Dendritic cell treated with granulocyte-macrophage colony-stimulating factor and Interleukin-4, amounts not matched to agents 40 ng/mL and 50 ng/mL, for 4 days (primary cell): ENCODE measurements at regions of chr1 and their contacts with region 1.

Region 1: DNA sequence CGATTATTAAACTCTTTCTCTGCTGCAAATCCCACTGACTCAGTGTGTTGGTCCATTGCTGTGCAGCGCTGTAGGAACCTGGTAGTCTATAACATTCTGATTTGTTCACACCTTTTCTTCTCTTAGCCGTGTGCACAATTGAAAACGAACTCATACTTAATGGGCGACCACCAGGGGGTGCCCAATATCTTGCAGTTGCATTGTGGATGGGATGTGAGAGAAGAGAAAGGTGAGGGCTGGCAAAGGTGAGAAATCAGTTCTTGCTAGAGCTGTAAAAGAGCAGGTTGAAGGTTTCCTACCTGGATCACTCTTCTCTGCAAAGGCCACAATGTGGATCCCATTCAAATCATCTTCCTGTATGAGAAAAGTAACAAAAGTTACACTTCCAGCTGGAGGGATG is 51.0 kb downstream of the CASQ2 start:
- H3K4me3 Mint-ChIP-seq: no peak overlapping the region
- H3K27ac Mint-ChIP-seq: no peak overlapping the region
- H3K4me1 Mint-ChIP-seq: peaks cover 9% of the 10 kb centered on the region
- H3K27me3 Mint-ChIP-seq: no peaks in the 10 kb centered on the region

Region 2: GRCh38 chr1:115764541-115764940 is 47.0 kb after region 1 on chr1:
- intact Hi-C with region 1: loop called (anchors 1 kb)
- H3K4me3 Mint-ChIP-seq: no peak overlapping the region
- H3K27ac Mint-ChIP-seq: no peak overlapping the region
- H3K4me1 Mint-ChIP-seq: peaks cover 17% of the 10 kb centered on the region
- H3K27me3 Mint-ChIP-seq: no peaks in the 10 kb centered on the region

Region 3: DNA sequence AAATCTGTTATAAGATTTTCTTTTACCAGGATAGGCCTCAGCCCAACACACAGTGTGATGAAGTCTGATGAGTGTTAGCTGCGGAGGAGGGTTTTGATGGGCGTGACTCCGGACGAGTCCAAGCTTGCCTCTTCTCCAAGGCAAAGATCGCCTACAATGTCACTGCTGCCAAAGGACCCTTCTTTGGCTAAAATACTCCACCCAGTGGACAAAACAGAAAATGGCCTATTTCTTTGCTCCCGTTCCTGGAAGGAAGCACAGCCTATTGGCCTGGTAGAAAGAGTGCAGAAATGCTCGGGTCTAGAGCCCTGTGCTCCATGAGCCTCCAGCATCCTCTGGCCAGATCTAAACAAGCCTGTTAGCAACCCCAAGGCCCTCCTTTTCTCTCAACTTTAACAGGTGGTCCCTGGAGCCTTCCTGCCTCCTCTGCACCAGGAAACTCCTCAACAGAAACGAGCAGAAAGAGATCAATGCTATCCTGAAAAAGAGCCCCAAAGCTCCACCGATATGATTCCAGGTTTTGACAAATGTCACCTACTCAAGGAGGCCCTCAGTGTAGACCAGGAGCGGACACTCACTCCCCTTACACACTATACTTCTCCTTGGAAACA is 54.4 kb after region 1 on chr1:
- intact Hi-C with region 1: loop called (anchors 1 kb)
- H3K4me3 Mint-ChIP-seq: no peak overlapping the region
- H3K27ac Mint-ChIP-seq: no peak overlapping the region
- H3K4me1 Mint-ChIP-seq: no peaks in the 10 kb centered on the region
- H3K27me3 Mint-ChIP-seq: peaks cover 9% of the 10 kb centered on the region